Activated CD8-positive, alpha-beta T cell treated with anti-CD3 and anti-CD28 coated beads for 36 hours (primary cell): ENCODE measurements at regions of chr7 and their contacts with region 1.

Region 1: GRCh38 chr7:149071641-149072437 is 18.7 kb downstream of the ZNF786 start:
- DNase-seq: peak; percentile 63
- ATAC-seq: peak; percentile 88
- H3K4me3 Mint-ChIP-seq: peak overlapping the region; percentile 52
- H3K27ac Mint-ChIP-seq: peak overlapping the region; percentile 75
- H3K4me1 Mint-ChIP-seq: peaks cover 2% of the 10 kb centered on the region
- H3K27me3 Mint-ChIP-seq: no peaks in the 10 kb centered on the region
- CTCF ChIP-seq: no peak

Region 2: GRCh38 chr7:148987010-148987750 is 84.7 kb before region 1 on chr7:
- CTCF ChIA-PET with region 1: interaction called, 17 read pairs
- POLR2A ChIA-PET with region 1: no interaction called
- intact Hi-C with region 1: no loop called
- DNase-seq: peak; percentile 90
- ATAC-seq: peak; percentile 81
- H3K4me3 Mint-ChIP-seq: peak overlapping the region; percentile 90
- H3K27ac Mint-ChIP-seq: peak overlapping the region; percentile 95
- H3K4me1 Mint-ChIP-seq: peaks cover 44% of the 10 kb centered on the region
- H3K27me3 Mint-ChIP-seq: peaks cover 4% of the 10 kb centered on the region
- CTCF ChIP-seq: no peak

Region 3: GRCh38 chr7:149028346-149029109 is 43.3 kb before region 1 on chr7 and contains the start of gene PDIA4:
- CTCF ChIA-PET with region 1: interaction called, 54 read pairs
- POLR2A ChIA-PET with region 1: interaction called, 7 read pairs
- intact Hi-C with region 1: loop called (anchors 5 kb)
- DNase-seq: peak; percentile 100
- ATAC-seq: peak; percentile 90
- H3K4me3 Mint-ChIP-seq: peak within 1 kb of the TSS; percentile 93
- H3K27ac Mint-ChIP-seq: peak within 1 kb of the TSS; percentile 93
- H3K4me1 Mint-ChIP-seq: peaks cover 31% of the 10 kb centered on the region
- H3K27me3 Mint-ChIP-seq: no peaks in the 10 kb centered on the region
- CTCF ChIP-seq: no peak
- total RNA-seq, gene PDIA4: 72.6 to 75.7 TPM

Region 4: DNA sequence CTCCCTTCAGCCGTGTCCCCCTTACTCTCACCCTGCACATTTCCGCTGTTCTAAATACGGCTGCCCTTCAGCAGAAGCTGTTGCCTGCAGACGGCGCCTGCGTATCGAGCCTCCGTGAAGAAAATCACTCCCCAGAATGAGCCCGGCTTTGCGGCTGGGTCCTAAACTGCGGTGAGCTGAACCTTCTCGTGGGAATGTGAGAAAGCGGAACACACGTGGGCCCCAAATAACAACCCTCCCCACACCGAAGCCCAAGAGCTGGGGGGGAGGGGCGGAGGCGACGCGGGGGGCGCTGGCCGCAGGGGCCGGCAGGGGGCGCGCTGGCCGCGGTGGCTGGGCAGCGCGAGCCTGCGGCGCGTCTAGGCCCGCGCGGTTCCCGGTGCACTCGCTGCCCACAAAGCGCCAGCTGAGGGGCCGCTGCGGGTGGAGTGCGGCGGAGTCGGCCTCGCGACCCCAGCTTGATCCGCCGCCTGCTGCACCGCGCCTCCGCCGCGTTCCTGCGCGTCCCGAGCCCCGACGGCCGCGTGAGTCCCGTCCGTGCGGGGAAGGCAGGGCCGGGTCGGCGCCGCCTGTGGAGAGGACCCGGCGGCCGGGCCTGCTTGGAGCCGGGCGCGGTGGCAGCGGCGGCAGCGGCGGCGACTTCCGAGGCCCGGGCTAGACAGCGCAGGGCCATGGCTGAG is 75.4 kb after region 1 on chr7 and contains the start of gene ZNF398:
- CTCF ChIA-PET with region 1: interaction called, 10 read pairs
- POLR2A ChIA-PET with region 1: no interaction called
- intact Hi-C with region 1: no loop called
- DNase-seq: peak; percentile 75
- ATAC-seq: peak; percentile 86
- H3K4me3 Mint-ChIP-seq: peak within 1 kb of the TSS; percentile 97
- H3K27ac Mint-ChIP-seq: peak within 1 kb of the TSS; percentile 95
- H3K4me1 Mint-ChIP-seq: peaks cover 28% of the 10 kb centered on the region
- H3K27me3 Mint-ChIP-seq: no peaks in the 10 kb centered on the region
- CTCF ChIP-seq: peak; percentile 87
- total RNA-seq, gene ZNF398: 7.2 to 8.7 TPM